IMR-90 (cell line): ENCODE measurements at regions of chr15 and their contacts with region 1.

Region 1: DNA sequence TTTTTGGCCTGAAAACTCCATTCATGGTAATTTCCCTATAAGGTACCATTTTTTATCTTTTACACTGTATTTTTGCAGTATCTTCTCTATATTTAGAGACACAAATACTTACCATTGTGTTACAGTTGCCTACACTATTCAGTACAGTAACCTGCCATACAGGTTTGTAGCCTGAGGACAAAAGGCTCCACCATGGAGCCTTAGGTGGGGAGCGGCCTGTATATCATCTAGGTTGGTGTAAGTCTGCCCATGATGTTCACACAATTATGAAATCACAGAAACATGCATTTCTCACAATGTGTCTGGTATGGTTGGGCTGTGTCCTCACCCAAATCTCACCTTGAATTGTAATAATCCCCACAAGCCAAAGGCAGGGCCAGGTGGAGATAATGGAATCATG is 43.9 kb upstream of the LYSMD4 start:
- DNase-seq: no peak
- ATAC-seq: no peak
- H3K4me3 ChIP-seq: no peak overlapping the region
- H3K27ac ChIP-seq: no peak overlapping the region
- H3K4me1 ChIP-seq: no peaks in the 10 kb centered on the region
- H3K27me3 ChIP-seq: peaks cover 5% of the 10 kb centered on the region
- CTCF ChIP-seq: no peak
- POLR2A ChIP-seq: no peak
- RAD21 ChIP-seq: no peak

Region 2: DNA sequence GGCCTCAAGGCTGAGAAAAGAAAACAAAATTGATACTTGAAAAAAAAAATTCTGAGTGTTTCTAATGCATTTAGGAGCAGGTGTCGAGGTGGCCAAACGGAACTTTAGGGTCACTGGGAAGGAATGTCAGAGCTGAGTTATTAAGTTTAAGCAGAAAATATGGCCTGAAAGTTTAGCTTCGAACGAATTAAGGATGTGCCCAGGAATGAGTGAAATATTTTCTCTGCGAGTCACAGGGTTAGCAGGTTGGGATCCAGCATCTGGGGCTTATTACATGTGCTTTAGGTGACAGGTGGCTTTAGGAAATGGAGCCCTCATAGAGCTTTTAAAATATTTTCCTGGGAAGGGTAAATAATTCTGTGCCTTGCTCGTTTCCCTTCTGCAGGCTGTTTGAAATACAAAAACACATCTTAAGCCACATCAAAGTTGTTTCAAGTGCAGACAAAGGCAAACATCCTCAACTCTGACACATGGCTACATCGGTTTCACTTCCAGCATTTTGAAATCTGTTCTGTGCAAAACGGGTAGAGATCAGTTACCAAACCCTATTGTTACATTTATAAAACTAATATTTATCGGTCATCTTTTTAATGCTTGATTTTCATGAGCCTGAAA is 1959.8 kb before region 1 on chr15:
- CTCF ChIA-PET with region 1: no interaction called
- POLR2A ChIA-PET with region 1: no interaction called
- dilution Hi-C with region 1: no loop called
- in situ Hi-C with region 1: no loop called
- intact Hi-C with region 1: loop called (anchors 5 kb)
- DNase-seq: no peak
- ATAC-seq: no peak
- H3K4me3 ChIP-seq: no peak overlapping the region
- H3K27ac ChIP-seq: no peak overlapping the region
- H3K4me1 ChIP-seq: no peaks in the 10 kb centered on the region
- H3K27me3 ChIP-seq: no peaks in the 10 kb centered on the region
- CTCF ChIP-seq: no peak
- POLR2A ChIP-seq: no peak
- RAD21 ChIP-seq: no peak